ENCODE measurements at regions of chr1 and their contacts with region 1.

Region 1: DNA sequence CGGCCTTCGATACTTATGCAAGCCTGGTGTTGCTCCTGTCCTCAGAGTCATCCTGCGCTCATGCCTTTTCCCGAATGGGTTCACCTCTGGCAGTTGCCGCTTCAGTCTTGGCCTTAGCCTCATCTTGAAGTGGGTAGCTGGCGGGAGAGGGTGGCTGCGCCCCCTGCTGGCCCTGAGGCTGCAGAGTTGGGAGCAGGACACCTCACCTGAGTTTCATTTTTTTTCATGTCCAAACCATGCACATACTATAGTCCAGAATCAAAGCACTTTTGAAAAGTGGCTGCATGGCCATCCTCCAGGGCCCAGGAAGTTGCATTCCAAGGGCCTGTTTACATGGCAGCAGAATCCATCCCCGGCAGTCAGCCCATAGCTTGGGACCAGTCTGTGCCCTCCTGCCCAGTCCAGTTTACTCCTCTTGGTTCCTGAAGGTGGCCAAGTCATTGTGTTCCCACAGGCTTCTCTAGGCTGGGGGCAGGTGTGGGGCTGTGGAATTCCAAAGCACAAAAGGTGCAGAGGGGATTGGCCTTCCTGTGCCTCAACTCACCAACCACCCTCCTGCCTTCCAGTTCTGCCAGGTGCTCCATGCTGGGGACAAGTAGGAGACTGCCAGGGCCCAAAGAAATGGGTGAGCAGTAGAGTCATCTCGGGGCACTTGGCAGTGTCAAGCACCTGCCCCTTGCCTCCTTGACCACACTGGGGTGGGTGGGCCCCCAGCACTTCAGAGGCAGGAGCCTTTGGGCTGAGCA is 44.0 kb downstream of the YARS1 start:
- DNase-seq: peak; percentile 79
- ATAC-seq: peak; percentile 79
- H3K4me3 ChIP-seq: no peak overlapping the region
- H3K4me3 Mint-ChIP-seq: no peak overlapping the region
- H3K27ac ChIP-seq: no peak overlapping the region
- H3K27ac Mint-ChIP-seq: peak overlapping the region; percentile 46
- H3K4me1 ChIP-seq: peaks cover 0 to 3% of the 10 kb centered on the region in 2 donors
- H3K4me1 Mint-ChIP-seq: peaks cover 3% of the 10 kb centered on the region
- H3K27me3 ChIP-seq: no peaks in the 10 kb centered on the region
- H3K27me3 Mint-ChIP-seq: no peaks in the 10 kb centered on the region
- CTCF ChIP-seq: peak; percentile 89

Region 2: GRCh38 chr1:32448773-32449456 is 324.3 kb before region 1 on chr1:
- CTCF ChIA-PET with region 1: interaction called, 8 read pairs
- POLR2A ChIA-PET with region 1: no interaction called
- intact Hi-C with region 1: loop called (anchors 2 kb)
- DNase-seq: no peak
- ATAC-seq: no peak
- H3K4me3 ChIP-seq: no peak overlapping the region
- H3K4me3 Mint-ChIP-seq: no peak overlapping the region
- H3K27ac ChIP-seq: no peak overlapping the region
- H3K27ac Mint-ChIP-seq: no peak overlapping the region
- H3K4me1 ChIP-seq: no peaks in the 10 kb centered on the region
- H3K4me1 Mint-ChIP-seq: no peaks in the 10 kb centered on the region
- H3K27me3 ChIP-seq: peaks cover 0 to 10% (median 4%) of the 10 kb centered on the region in 4 experiments
- H3K27me3 Mint-ChIP-seq: peaks cover 9% of the 10 kb centered on the region
- CTCF ChIP-seq: no peak

Region 3: DNA sequence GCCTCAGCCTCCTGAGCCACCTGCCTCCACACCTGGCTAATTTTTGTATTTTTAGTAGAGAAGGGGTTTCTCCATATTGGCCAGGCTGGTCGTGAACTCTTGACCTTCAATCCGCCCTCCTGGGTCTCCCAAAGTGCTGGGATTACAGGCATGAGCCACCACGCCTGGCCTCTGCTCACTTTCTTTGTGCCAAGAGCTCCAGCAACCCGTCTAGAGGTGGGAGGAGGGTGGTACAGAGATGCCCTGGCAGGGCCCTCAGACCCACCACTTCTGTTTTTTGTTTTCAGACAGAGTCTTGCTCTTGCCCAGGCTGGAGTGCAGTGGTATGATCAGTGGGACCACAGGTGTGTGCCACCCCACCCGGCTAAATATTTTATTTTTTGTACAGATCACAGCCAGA is 63.7 kb before region 1 on chr1:
- CTCF ChIA-PET with region 1: interaction called, 75 read pairs
- POLR2A ChIA-PET with region 1: no interaction called
- intact Hi-C with region 1: loop called (anchors 1 kb)
- DNase-seq: no peak
- ATAC-seq: no peak
- H3K4me3 ChIP-seq: no peak overlapping the region
- H3K4me3 Mint-ChIP-seq: no peak overlapping the region
- H3K27ac ChIP-seq: no peak overlapping the region
- H3K27ac Mint-ChIP-seq: no peak overlapping the region
- H3K4me1 ChIP-seq: peaks cover 6 to 7% of the 10 kb centered on the region in 2 donors
- H3K4me1 Mint-ChIP-seq: peaks cover 5% of the 10 kb centered on the region
- H3K27me3 ChIP-seq: peaks cover 0 to 13% (median 3%) of the 10 kb centered on the region in 4 experiments
- H3K27me3 Mint-ChIP-seq: peaks cover 21% of the 10 kb centered on the region
- CTCF ChIP-seq: no peak

Region 4: DNA sequence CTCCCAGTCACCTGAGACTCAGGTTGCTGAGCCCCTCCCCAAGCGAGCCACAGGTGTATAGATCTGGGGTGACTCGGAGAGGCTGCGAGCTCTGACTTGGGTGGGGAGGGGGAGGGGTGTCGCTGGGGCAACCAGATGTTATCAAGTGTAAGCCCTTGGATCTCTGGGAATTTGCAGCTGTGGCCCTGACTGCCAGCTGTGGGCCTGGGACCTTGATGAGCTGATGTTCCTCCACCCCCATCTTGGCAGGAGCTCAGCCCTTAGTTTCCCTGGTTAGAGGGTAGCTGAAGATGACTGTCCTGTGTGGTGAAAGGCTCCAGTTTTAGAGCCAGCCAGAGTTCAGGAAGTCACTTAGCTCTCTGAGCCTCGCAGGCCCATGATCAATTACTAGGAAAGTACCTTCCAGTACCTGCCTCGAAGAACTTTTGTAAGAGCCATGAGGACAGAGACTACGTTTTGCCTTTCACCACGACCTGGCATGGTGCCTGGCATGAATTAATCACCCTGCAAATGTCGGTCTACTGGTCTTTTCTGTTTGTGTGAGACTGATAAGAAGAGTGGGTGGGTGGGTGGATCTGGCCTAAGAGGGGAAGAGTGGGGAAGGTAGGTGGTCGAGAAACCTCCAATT is 11.8 kb before region 1 on chr1:
- CTCF ChIA-PET with region 1: interaction called, 12 read pairs
- POLR2A ChIA-PET with region 1: no interaction called
- intact Hi-C with region 1: no loop called
- DNase-seq: no peak
- ATAC-seq: no peak
- H3K4me3 ChIP-seq: no peak overlapping the region
- H3K4me3 Mint-ChIP-seq: no peak overlapping the region
- H3K27ac ChIP-seq: no peak overlapping the region
- H3K27ac Mint-ChIP-seq: no peak overlapping the region
- H3K4me1 ChIP-seq: no peaks in the 10 kb centered on the region
- H3K4me1 Mint-ChIP-seq: no peaks in the 10 kb centered on the region
- H3K27me3 ChIP-seq: no peaks in the 10 kb centered on the region
- H3K27me3 Mint-ChIP-seq: no peaks in the 10 kb centered on the region
- CTCF ChIP-seq: no peak

Region 5: DNA sequence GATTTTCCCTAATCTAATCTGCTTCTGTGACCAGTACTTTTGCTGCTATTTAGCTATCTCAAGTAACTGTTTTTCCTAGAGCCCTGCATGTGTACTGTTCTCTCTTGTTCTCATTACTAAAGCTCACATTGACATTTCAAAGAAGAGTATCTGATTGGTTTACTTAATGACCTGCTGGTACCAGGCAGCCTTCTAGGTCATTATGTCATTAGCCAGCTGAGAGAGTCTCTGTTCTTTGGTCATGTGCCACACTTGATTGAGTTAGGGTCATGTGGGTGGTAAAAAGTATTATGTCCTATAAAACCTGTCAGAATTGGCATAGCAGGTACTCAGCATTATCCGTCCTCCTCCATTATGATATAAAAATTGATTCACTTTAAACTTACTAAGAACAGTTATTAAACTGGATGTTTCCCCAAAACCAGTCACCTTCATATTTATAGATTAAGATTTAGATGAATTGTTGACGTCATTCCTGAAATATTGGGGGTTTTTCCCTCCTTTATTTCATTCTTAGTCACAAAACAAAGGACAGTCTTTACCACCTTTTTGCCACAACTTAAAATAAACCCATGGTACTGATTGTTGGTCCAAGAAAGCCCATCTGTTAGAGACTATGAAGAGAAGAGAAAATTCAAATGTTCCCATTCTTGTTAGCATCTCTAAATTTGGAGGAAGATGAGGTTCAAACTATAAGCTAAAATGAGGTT is 75.3 kb after region 1 on chr1:
- CTCF ChIA-PET with region 1: no interaction called
- POLR2A ChIA-PET with region 1: no interaction called
- intact Hi-C with region 1: no loop called
- DNase-seq: no peak
- ATAC-seq: no peak
- H3K4me3 ChIP-seq: no peak overlapping the region
- H3K4me3 Mint-ChIP-seq: no peak overlapping the region
- H3K27ac ChIP-seq: no peak overlapping the region
- H3K27ac Mint-ChIP-seq: no peak overlapping the region
- H3K4me1 ChIP-seq: no peaks in the 10 kb centered on the region
- H3K4me1 Mint-ChIP-seq: no peaks in the 10 kb centered on the region
- H3K27me3 ChIP-seq: no peaks in the 10 kb centered on the region
- H3K27me3 Mint-ChIP-seq: no peaks in the 10 kb centered on the region
- CTCF ChIP-seq: no peak

Region 6: DNA sequence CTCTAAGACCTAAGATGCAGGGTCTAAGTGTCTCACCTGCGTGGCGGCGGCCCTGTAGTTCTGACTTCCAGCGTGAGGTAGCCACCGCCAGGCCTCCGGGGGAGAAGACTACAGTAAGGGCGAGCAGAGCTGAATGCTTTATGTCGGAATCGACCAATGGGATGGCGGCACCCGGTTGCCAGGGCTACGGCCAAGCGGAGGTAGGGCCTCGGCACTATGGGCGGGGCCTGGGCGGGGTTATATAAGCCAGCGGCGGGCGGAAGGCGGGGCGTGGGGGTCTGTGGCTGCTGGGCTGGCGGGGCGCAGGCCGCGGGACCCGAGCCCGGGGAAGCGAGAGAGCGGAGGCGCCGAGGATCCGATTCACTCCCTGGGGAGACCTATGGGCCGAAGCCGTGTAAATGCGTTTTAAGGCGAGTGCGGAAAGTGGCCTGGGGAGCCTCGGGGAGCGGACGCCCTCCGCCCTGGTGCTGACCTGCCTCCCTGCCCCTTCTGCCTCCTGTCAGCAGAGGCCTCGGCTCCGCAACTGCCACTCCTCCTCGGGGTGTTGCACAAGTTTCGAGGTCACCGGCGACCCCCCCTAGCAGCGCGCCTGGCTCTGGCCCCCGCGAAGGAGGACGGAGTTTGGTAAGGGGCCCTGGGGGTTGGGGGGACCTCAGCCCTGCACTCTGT is 307.8 kb after region 1 on chr1 and contains the start of gene AZIN2:
- CTCF ChIA-PET with region 1: no interaction called
- POLR2A ChIA-PET with region 1: no interaction called
- intact Hi-C with region 1: no loop called
- DNase-seq: peak; percentile 94
- ATAC-seq: peak; percentile 99
- H3K4me3 ChIP-seq: peak within 1 kb of the TSS; percentile 50 to 73 (median 63)
- H3K4me3 Mint-ChIP-seq: peak within 1 kb of the TSS; percentile 85
- H3K27ac ChIP-seq: no peak within 1 kb of the TSS
- H3K27ac Mint-ChIP-seq: peak within 1 kb of the TSS; percentile 47
- H3K4me1 ChIP-seq: peaks cover 14 to 19% of the 10 kb centered on the region in 2 donors
- H3K4me1 Mint-ChIP-seq: peaks cover 21% of the 10 kb centered on the region
- H3K27me3 ChIP-seq: peaks cover 0 to 12% (median 4%) of the 10 kb centered on the region in 4 experiments
- H3K27me3 Mint-ChIP-seq: peaks cover 7% of the 10 kb centered on the region
- CTCF ChIP-seq: no peak
- total RNA-seq, gene AZIN2: 5.4 and 5.9 TPM in 2 replicates